PC-9 (cell line): ENCODE measurements at regions of chr9 and their contacts with region 1.

Region 1: GRCh38 chr9:107674721-107675277 is 185.2 kb upstream of the KLF4 start:
- DNase-seq: no peak
- H3K4me3 ChIP-seq: no peak overlapping the region
- H3K27ac ChIP-seq: no peak overlapping the region
- H3K4me1 ChIP-seq: no peaks in the 10 kb centered on the region
- H3K27me3 ChIP-seq: no peaks in the 10 kb centered on the region
- CTCF ChIP-seq: no peak

Region 2: GRCh38 chr9:106657926-106658325 is 1016.9 kb before region 1 on chr9:
- CTCF ChIA-PET with region 1: interaction called, 11 read pairs
- POLR2A ChIA-PET with region 1: no interaction called
- intact Hi-C with region 1: no loop called
- DNase-seq: no peak
- H3K4me3 ChIP-seq: no peak overlapping the region
- H3K27ac ChIP-seq: no peak overlapping the region
- H3K4me1 ChIP-seq: no peaks in the 10 kb centered on the region
- H3K27me3 ChIP-seq: no peaks in the 10 kb centered on the region
- CTCF ChIP-seq: no peak

Region 3: GRCh38 chr9:107155244-107155817 is 519.5 kb before region 1 on chr9:
- CTCF ChIA-PET with region 1: no interaction called
- POLR2A ChIA-PET with region 1: no interaction called
- intact Hi-C with region 1: no loop called
- DNase-seq: no peak
- H3K4me3 ChIP-seq: no peak overlapping the region
- H3K27ac ChIP-seq: no peak overlapping the region
- H3K4me1 ChIP-seq: no peaks in the 10 kb centered on the region
- H3K27me3 ChIP-seq: no peaks in the 10 kb centered on the region
- CTCF ChIP-seq: peak; percentile 39; the same call in 1 of the 2 replicates

Region 4: GRCh38 chr9:107438211-107439090 is 236.3 kb before region 1 on chr9:
- CTCF ChIA-PET with region 1: no interaction called
- POLR2A ChIA-PET with region 1: no interaction called
- intact Hi-C with region 1: no loop called
- DNase-seq: peak; percentile 33 to 90
- H3K4me3 ChIP-seq: peak overlapping the region; percentile 25; the same call in 1 of the 2 replicates
- H3K27ac ChIP-seq: peak overlapping the region; percentile 73
- H3K4me1 ChIP-seq: peaks cover 19% of the 10 kb centered on the region
- H3K27me3 ChIP-seq: no peaks in the 10 kb centered on the region
- CTCF ChIP-seq: no peak

Region 5: DNA sequence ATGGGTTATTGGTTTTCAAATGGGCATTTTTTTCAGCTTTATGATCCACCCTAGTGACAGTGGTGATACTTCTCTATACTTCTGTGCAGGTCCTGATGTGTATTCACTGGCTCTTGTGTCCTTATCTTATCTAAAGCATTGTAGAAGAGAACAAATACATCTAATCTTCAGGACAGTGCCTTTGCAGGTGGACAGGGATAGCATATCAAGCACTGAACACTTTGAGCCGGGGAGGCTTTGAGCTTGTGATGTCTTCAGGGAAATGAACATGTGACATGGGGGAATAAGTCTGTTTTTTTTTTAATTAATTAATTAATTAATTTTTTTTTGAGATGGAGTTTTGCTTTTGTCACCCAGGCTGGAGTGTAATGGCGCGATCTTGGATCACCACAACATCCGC is 69.8 kb before region 1 on chr9:
- CTCF ChIA-PET with region 1: no interaction called
- POLR2A ChIA-PET with region 1: no interaction called
- intact Hi-C with region 1: no loop called
- DNase-seq: no peak
- H3K4me3 ChIP-seq: no peak overlapping the region
- H3K27ac ChIP-seq: no peak overlapping the region
- H3K4me1 ChIP-seq: no peaks in the 10 kb centered on the region
- H3K27me3 ChIP-seq: no peaks in the 10 kb centered on the region
- CTCF ChIP-seq: no peak